CD4-positive, alpha-beta T cell (primary cell): ENCODE measurements at regions of chr15 and their contacts with region 1.

Region 1: GRCh38 chr15:68730471-68730919 is 90.2 kb downstream of the ANP32A start:
- DNase-seq: peak in 9 of 14 experiments; percentile 2 to 58 (median 11)
- ATAC-seq: no peak
- H3K4me3 ChIP-seq: no peak overlapping the region
- H3K4me3 Mint-ChIP-seq: no peak overlapping the region
- H3K27ac ChIP-seq: no peak overlapping the region
- H3K27ac Mint-ChIP-seq: no peak overlapping the region
- H3K4me1 ChIP-seq: no peaks in the 10 kb centered on the region
- H3K4me1 Mint-ChIP-seq: no peaks in the 10 kb centered on the region
- H3K27me3 ChIP-seq: peaks cover 0 to 2% of the 10 kb centered on the region in 2 experiments
- H3K27me3 Mint-ChIP-seq: peaks cover 4% of the 10 kb centered on the region
- CTCF ChIP-seq: peak; percentile 50

Region 2: GRCh38 chr15:68700455-68701123 is 29.9 kb before region 1 on chr15:
- CTCF ChIA-PET with region 1: no interaction called
- POLR2A ChIA-PET with region 1: no interaction called
- intact Hi-C with region 1: no loop called
- DNase-seq: no peak
- ATAC-seq: no peak
- H3K4me3 ChIP-seq: no peak overlapping the region
- H3K4me3 Mint-ChIP-seq: no peak overlapping the region
- H3K27ac ChIP-seq: no peak overlapping the region
- H3K27ac Mint-ChIP-seq: no peak overlapping the region
- H3K4me1 ChIP-seq: no peaks in the 10 kb centered on the region
- H3K4me1 Mint-ChIP-seq: no peaks in the 10 kb centered on the region
- H3K27me3 ChIP-seq: no peaks in the 10 kb centered on the region
- H3K27me3 Mint-ChIP-seq: no peaks in the 10 kb centered on the region
- CTCF ChIP-seq: no peak

Region 3: DNA sequence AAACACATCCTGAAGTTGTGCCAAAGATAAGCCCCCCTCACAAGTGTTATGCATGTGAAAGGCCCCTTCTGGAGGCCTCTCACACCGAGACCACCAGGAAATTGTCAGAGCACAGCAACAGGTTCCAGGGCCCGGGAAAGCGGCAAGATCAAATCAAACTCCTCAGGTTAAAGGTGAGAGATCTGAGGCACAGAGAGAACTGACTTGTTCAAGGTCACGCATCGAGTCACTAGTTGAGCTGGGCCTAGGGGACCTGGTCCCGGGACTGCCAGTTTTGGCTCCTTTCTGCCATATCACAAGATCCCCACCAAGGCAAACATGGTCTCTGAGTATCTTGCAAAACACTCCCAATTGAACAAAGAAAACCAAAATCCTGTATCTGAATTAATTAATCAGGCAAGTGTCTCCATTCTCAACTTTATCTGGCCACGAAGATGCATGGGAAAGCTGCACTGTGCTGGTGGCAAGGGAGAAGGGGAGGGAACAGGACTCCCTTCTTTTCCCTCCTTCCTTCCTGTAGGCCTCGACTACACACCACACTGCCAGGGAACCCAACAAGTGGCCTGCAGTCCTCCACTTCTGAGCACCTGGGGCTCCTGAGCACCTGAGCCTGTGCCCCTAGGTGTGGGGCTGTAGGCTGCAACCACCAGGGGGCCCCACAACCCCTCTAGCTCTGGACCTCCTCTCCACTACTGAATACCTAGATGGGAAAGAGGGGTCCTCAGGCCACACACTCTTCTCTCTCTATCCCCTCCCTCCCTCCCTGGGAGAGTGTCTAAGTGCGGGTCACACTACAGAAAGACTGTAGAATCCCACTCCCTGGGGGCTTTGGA is 52.9 kb after region 1 on chr15:
- CTCF ChIA-PET with region 1: no interaction called
- POLR2A ChIA-PET with region 1: no interaction called
- intact Hi-C with region 1: loop called in 1 of 2 experiments (anchors 2 kb)
- DNase-seq: peak; percentile 56 to 84 (median 66)
- ATAC-seq: peak; percentile 89
- H3K4me3 ChIP-seq: no peak overlapping the region
- H3K4me3 Mint-ChIP-seq: no peak overlapping the region
- H3K27ac ChIP-seq: no peak overlapping the region
- H3K27ac Mint-ChIP-seq: peak overlapping the region; percentile 76
- H3K4me1 ChIP-seq: peaks cover 36% of the 10 kb centered on the region
- H3K4me1 Mint-ChIP-seq: peaks cover 30% of the 10 kb centered on the region
- H3K27me3 ChIP-seq: no peaks in the 10 kb centered on the region
- H3K27me3 Mint-ChIP-seq: no peaks in the 10 kb centered on the region
- CTCF ChIP-seq: peak; percentile 70

Region 4: GRCh38 chr15:68829068-68829467 is 98.6 kb after region 1 on chr15:
- CTCF ChIA-PET with region 1: no interaction called
- POLR2A ChIA-PET with region 1: no interaction called
- intact Hi-C with region 1: loop called in 1 of 2 experiments (anchors 2 kb)
- DNase-seq: peak in 4 of 14 experiments; percentile 31 to 67 (median 56)
- ATAC-seq: peak; percentile 64
- H3K4me3 ChIP-seq: no peak overlapping the region
- H3K4me3 Mint-ChIP-seq: no peak overlapping the region
- H3K27ac ChIP-seq: no peak overlapping the region
- H3K27ac Mint-ChIP-seq: no peak overlapping the region
- H3K4me1 ChIP-seq: peaks cover 6% of the 10 kb centered on the region
- H3K4me1 Mint-ChIP-seq: peaks cover 19% of the 10 kb centered on the region
- H3K27me3 ChIP-seq: no peaks in the 10 kb centered on the region
- H3K27me3 Mint-ChIP-seq: no peaks in the 10 kb centered on the region
- CTCF ChIP-seq: peak; percentile 61

Region 5: GRCh38 chr15:68888419-68888818 is 157.9 kb after region 1 on chr15:
- CTCF ChIA-PET with region 1: no interaction called
- POLR2A ChIA-PET with region 1: no interaction called
- intact Hi-C with region 1: no loop called
- DNase-seq: peak in 4 of 14 experiments; percentile 4 to 39 (median 17)
- ATAC-seq: peak; percentile 56
- H3K4me3 ChIP-seq: no peak overlapping the region
- H3K4me3 Mint-ChIP-seq: peak overlapping the region; percentile 26
- H3K27ac ChIP-seq: no peak overlapping the region
- H3K27ac Mint-ChIP-seq: no peak overlapping the region
- H3K4me1 ChIP-seq: no peaks in the 10 kb centered on the region
- H3K4me1 Mint-ChIP-seq: no peaks in the 10 kb centered on the region
- H3K27me3 ChIP-seq: no peaks in the 10 kb centered on the region
- H3K27me3 Mint-ChIP-seq: peaks cover 16% of the 10 kb centered on the region
- CTCF ChIP-seq: no peak

Region 6: DNA sequence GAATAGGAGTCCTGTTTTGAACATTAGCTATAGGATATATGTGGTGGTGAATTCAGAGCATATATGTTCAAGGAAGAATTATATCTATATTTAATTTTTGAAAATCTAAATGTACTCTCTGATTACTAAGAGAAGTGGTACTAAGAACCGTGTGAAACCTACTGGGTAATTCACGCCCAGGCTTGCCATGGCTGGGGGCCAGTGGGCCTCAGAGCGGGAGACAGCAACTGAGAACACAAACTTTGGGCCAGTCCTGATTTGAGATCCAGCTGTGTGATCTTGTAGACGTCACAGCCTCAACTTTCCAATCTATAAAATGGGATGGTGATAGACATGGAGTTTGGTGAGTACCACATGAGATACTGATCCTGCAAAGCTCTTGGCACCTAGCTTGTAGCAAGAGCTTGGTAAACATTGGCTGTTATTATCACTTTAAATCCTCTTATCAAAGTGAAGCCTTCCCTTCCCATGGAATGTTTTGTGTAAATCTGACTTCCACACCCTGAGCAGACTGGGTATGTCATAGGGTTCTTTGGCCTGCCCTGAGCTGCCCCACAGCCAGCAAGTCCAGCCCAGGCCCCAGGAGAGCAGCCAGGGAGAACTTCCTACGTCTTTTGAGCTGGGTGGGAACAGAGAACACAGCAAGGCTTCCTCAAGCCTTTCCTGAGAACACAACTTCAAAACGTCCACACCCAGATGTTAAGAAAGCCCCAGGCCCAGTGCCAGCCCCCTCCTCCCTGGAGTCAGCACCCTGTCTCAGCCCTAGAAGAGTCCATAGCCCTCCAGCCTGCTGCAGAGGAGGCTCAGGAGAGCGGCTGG is 560.1 kb after region 1 on chr15:
- CTCF ChIA-PET with region 1: no interaction called
- POLR2A ChIA-PET with region 1: no interaction called
- intact Hi-C with region 1: no loop called
- DNase-seq: no peak
- ATAC-seq: no peak
- H3K4me3 ChIP-seq: no peak overlapping the region
- H3K4me3 Mint-ChIP-seq: no peak overlapping the region
- H3K27ac ChIP-seq: no peak overlapping the region
- H3K27ac Mint-ChIP-seq: no peak overlapping the region
- H3K4me1 ChIP-seq: no peaks in the 10 kb centered on the region
- H3K4me1 Mint-ChIP-seq: no peaks in the 10 kb centered on the region
- H3K27me3 ChIP-seq: no peaks in the 10 kb centered on the region
- H3K27me3 Mint-ChIP-seq: peaks cover 8% of the 10 kb centered on the region
- CTCF ChIP-seq: no peak

Region 7: DNA sequence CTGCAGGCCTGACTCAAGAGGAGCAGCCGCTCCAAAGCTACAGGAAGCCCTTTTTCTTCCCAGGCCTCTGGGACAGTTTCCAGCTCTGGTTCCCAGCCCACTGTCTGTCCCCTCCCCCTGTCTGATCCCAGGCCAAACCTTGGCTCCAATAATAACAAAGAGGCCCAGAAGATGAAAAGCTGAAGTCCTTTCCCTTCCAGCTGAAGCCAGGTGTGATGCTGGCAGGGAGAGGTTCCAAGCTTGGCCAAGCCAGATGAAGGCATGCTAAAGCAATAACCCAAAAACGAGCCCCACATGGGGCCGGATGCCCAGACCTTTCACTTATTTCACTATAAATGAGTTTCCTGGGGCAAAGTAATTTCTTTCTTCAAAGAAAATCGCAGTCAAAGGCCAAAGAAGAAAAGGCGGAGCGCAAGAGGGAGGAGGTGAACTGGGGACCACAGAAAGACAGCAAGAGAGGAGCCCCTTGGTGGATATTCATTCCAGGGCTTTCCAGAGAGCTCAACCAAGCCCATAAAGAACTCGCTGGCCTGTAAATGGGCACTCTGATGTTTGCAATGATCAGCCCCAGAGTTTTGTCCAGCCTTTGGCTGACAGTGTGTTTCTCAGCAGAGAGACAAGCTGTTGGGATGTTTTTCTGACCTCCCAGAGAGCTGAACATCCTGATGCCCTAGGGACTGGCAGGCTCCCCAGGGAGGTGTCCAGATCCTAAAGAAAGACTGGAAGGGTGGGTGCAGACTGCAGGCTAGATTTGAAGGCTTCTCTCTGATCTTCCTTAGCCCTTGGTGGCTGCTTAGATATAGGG is 1875.3 kb after region 1 on chr15:
- CTCF ChIA-PET with region 1: no interaction called
- POLR2A ChIA-PET with region 1: no interaction called
- intact Hi-C with region 1: no loop called
- DNase-seq: no peak
- ATAC-seq: no peak
- H3K4me3 ChIP-seq: no peak overlapping the region
- H3K4me3 Mint-ChIP-seq: no peak overlapping the region
- H3K27ac ChIP-seq: no peak overlapping the region
- H3K27ac Mint-ChIP-seq: no peak overlapping the region
- H3K4me1 ChIP-seq: no peaks in the 10 kb centered on the region
- H3K4me1 Mint-ChIP-seq: no peaks in the 10 kb centered on the region
- H3K27me3 ChIP-seq: no peaks in the 10 kb centered on the region
- H3K27me3 Mint-ChIP-seq: no peaks in the 10 kb centered on the region
- CTCF ChIP-seq: no peak